ENCODE measurements at regions of chr13 and their contacts with region 1.

Region 1: DNA sequence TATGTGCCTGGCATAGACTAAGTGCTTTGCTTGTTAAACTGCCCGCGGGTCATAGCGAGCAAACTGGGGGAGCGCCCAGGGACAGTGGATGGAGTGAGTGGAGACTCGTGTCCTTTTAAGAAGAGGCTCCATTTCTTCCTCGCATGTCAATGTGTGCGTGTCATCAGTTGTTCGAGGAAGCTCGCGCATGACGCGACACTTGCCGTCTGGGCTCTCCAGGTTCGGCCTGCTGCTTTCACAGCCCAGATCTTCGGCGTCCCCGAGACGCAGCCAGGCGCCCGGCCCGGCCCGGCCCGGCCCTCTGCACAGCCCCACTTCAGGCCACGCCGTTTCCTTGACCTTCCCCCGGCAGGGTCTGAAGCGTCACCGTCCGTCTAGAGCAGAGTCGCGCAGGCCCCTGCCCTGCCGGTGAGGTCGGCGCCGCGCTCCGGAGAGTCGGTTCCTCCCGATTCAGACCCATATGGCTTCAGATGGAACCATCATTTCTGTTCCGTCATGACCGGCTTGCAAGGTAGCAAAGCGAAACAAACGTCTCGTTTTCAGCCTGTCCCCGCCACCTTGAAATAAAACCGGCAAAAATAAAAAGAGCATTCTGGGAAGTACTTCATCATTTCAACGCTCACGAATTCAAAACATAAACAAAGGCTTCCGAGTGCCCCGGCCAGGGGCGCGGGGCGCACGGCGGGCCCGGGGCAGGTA is 599 bp upstream of the ARHGEF7 start:
- DNase-seq: peak; percentile 72
- H3K4me3 Mint-ChIP-seq: peak overlapping the region; percentile 83
- H3K27ac Mint-ChIP-seq: no peak overlapping the region
- H3K4me1 Mint-ChIP-seq: peaks cover 10% of the 10 kb centered on the region
- H3K27me3 Mint-ChIP-seq: peaks cover 83% of the 10 kb centered on the region

Region 2: DNA sequence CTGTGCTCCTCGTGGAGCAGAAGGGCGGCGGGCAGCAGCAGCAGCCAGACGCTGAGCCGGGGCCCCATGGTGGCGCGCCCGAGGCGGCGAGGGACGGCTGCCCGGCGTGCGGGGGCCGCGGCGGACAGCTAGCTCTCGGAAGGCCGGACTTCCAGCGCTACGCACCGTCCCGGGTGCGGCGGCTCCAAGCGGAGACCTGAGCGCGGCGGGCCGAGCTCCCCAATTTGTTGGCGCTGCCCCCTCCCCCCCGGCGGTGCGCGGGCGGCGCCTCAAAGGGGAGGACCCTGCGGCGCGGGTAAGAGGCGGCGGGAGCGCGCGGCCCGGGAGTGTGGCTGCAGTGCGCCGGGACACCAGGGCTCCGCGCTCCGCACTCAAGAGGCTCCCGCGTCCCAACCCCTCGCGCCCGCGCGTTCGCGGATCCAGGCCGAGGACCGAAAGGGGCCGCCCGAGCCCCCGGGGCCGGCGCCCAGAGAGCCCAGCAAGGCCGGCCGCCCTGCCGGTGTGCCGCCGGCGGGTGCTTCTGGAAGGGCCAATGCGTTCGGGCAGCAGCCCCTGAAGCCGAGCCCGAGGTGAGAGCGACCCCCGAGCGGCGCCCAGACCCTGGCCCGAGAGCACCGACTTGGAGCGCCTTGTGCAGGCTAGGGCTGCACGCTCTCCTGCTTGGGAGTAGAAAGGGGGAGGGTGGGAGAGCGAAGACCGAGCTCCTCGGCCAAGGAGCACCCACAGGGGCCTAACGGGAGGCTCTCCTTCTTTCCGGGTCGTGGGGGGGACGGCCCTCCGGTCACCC is 807.4 kb before region 1 on chr13 and contains the starts of genes COL4A1 and COL4A2:
- intact Hi-C with region 1: loop called (anchors 10 kb)
- DNase-seq: no peak
- H3K4me3 Mint-ChIP-seq: peak within 1 kb of the TSS; percentile 51
- H3K27ac Mint-ChIP-seq: no peak within 1 kb of the TSS
- H3K4me1 Mint-ChIP-seq: peaks cover 5% of the 10 kb centered on the region
- H3K27me3 Mint-ChIP-seq: peaks cover 75% of the 10 kb centered on the region
- total RNA-seq, gene COL4A1: not detected in 2 replicates
- total RNA-seq, gene COL4A2: not detected in 2 replicates

Region 3: GRCh38 chr13:111066544-111066943 is 48.0 kb before region 1 on chr13:
- intact Hi-C with region 1: loop called (anchors 10 kb)
- DNase-seq: no peak
- H3K4me3 Mint-ChIP-seq: peak overlapping the region; percentile 63
- H3K27ac Mint-ChIP-seq: no peak overlapping the region
- H3K4me1 Mint-ChIP-seq: peaks cover 8% of the 10 kb centered on the region
- H3K27me3 Mint-ChIP-seq: peaks cover 62% of the 10 kb centered on the region

Region 4: GRCh38 chr13:112066624-112067004 is 952.1 kb after region 1 on chr13:
- intact Hi-C with region 1: loop called (anchors 10 kb)
- DNase-seq: peak; percentile 66
- H3K4me3 Mint-ChIP-seq: no peak overlapping the region
- H3K27ac Mint-ChIP-seq: no peak overlapping the region
- H3K4me1 Mint-ChIP-seq: peaks cover 3% of the 10 kb centered on the region
- H3K27me3 Mint-ChIP-seq: peaks cover 71% of the 10 kb centered on the region